Heart left ventricle (tissue), 16 donors: ENCODE measurements at regions of chrX and their contacts with region 1.

Region 1: GRCh38 chrX:103774070-103774642 is 2.5 kb upstream of the PLP1 start:
- DNase-seq: no peak
- ATAC-seq: peak; percentile 45 to 65 (median 55)
- H3K4me3 ChIP-seq: no peak overlapping the region
- H3K27ac ChIP-seq: no peak overlapping the region
- H3K4me1 ChIP-seq: peaks cover 0 to 1% (median 0%) of the 10 kb centered on the region in 12 donors
- H3K27me3 ChIP-seq: peaks cover 0 to 19% (median 0%) of the 10 kb centered on the region in 9 donors
- CTCF ChIP-seq: peak in 9 of 12 donors; percentile 16 to 49 (median 37)
- POLR2A ChIP-seq: no peak

Region 2: GRCh38 chrX:103549916-103550315 is 224.2 kb before region 1 on chrX:
- intact Hi-C with region 1: no loop called
- DNase-seq: no peak
- ATAC-seq: no peak
- H3K4me3 ChIP-seq: no peak overlapping the region
- H3K27ac ChIP-seq: no peak overlapping the region
- H3K4me1 ChIP-seq: no peaks in the 10 kb centered on the region
- H3K27me3 ChIP-seq: peaks cover 0 to 4% (median 0%) of the 10 kb centered on the region in 9 donors
- CTCF ChIP-seq: no peak
- POLR2A ChIP-seq: no peak

Region 3: DNA sequence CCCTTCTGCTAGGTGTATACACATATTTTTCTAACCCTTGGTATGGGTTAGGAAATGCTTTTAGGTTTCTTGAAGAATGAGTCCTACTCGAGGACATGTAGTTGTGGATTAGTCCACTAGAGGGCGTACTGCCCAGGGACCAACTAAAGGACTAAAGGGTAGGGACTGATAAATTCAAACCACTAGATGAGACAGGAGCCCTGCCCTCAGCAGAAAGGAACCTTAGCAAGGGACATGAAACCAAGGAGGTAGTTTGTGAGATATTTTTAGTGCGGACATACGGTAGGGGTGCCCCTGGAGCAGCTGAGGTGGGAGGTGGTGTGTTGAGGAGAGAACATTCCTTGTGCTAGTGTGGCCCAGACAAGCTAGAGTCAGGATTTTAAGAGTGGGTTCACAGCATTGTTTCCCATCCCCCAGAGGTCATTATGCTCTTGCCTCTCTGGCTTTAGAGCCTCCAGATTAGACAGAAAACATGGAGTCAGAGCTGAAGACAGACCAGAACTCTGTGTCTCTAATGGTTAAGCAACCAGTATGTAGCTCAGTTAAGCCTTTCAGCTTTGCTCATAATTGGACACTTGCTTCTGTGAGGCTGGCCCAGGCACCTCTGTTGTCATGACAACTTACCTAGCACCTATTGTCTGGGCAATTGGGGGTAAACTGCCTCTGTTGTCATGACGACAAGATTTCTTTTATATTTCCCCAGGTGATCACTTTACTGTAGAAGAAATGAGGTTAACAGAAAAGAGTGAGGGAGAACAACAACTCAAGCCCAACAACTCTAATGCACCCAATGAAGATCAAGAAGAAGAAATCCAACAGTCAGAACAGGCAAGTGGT is 62.4 kb before region 1 on chrX:
- intact Hi-C with region 1: loop called in 6 of 10 experiments (anchors 5 to 10 kb)
- DNase-seq: peak in 2 of 5 donors; percentile 22 to 41
- ATAC-seq: peak in 2 of 4 donors; percentile 54 to 69
- H3K4me3 ChIP-seq: no peak overlapping the region
- H3K27ac ChIP-seq: no peak overlapping the region
- H3K4me1 ChIP-seq: no peaks in the 10 kb centered on the region
- H3K27me3 ChIP-seq: peaks cover 0 to 4% (median 0%) of the 10 kb centered on the region in 9 donors
- CTCF ChIP-seq: peak; percentile 45 to 72 (median 59)
- POLR2A ChIP-seq: no peak

Region 4: GRCh38 chrX:103722505-103722904 is 51.7 kb before region 1 on chrX:
- intact Hi-C with region 1: loop called in 6 of 10 experiments (anchors 10 kb)
- DNase-seq: no peak
- ATAC-seq: peak in 3 of 4 donors; percentile 70 to 85 (median 77)
- H3K4me3 ChIP-seq: no peak overlapping the region
- H3K27ac ChIP-seq: no peak overlapping the region
- H3K4me1 ChIP-seq: peaks cover 0 to 3% (median 0%) of the 10 kb centered on the region in 12 donors
- H3K27me3 ChIP-seq: peaks cover 0 to 14% (median 0%) of the 10 kb centered on the region in 9 donors
- CTCF ChIP-seq: no peak
- POLR2A ChIP-seq: no peak